Esophagus muscularis mucosa (tissue), 4 donors: ENCODE measurements at regions of chr19 and their contacts with region 1.

Region 1: DNA sequence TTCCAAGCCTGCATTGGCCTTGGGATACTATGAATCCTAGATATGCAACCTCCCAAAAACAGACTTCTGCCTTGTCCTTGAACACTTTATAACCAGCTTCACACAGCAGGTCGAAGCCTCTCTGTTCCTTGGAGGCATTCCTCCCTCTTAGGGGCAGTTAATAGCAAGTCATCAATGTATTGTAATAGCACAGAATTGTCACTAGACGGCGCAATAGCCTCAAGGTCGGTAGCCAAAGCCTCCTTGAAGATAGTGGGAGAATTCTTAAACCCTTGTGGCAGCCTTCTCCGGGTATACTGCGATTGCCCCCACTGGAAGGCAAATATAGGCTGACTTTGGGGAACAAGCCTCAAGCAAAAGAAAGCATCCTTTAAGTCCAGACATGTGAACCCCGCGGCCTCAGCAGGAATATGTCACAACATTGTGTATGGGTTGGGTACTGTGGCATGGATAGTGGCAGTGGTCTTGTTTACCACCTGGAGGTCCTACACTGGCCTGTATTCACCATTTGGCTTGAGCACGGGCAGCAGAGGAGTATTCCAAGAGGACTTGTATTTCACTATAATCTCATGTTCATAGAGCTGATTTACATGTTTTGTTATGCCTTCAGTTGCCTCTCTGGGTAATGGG is 61.1 kb downstream of the ZNF431 start:
- DNase-seq: no peak
- H3K4me3 ChIP-seq: no peak overlapping the region
- H3K27ac ChIP-seq: no peak overlapping the region
- H3K4me1 ChIP-seq: no peaks in the 10 kb centered on the region
- H3K27me3 ChIP-seq: no peaks in the 10 kb centered on the region
- CTCF ChIP-seq: peak; percentile 42 to 62 (median 48)
- EP300 ChIP-seq: no peak
- POLR2A ChIP-seq: no peak

Region 2: DNA sequence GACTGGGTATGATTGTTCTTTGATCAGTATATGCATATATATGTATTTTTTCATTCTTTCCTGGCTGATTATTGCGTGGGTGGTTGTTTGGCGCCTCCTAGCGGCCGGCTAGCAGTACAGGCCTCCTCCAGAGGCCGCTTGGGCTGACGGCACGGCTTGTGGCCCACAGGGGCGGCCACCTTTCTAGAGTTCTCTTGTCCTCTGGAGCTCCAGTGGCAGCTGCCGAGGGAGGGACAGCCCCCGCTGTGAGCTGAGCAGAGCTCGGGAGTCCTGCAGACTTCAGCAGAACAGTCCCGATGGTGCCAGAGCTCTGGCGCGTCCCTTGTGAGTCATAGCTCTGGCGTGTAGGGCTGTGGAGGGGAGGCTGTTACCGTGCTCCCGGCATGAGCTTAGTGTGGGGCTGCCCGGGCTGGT is 279.9 kb after region 1 on chr19:
- intact Hi-C with region 1: loop called (anchors 2 kb)
- DNase-seq: no peak
- H3K4me3 ChIP-seq: peak overlapping the region in 3 of 4 donors; percentile 32 to 42 (median 32)
- H3K27ac ChIP-seq: peak overlapping the region in 2 of 4 donors; percentile 31 to 43
- H3K4me1 ChIP-seq: peaks cover 0 to 10% (median 3%) of the 10 kb centered on the region in 4 donors
- H3K27me3 ChIP-seq: no peaks in the 10 kb centered on the region
- CTCF ChIP-seq: peak; percentile 77 to 93 (median 77)
- EP300 ChIP-seq: no peak
- POLR2A ChIP-seq: no peak